K562 (cell line): ENCODE measurements at regions of chr10 and their contacts with region 1.

Region 1: DNA sequence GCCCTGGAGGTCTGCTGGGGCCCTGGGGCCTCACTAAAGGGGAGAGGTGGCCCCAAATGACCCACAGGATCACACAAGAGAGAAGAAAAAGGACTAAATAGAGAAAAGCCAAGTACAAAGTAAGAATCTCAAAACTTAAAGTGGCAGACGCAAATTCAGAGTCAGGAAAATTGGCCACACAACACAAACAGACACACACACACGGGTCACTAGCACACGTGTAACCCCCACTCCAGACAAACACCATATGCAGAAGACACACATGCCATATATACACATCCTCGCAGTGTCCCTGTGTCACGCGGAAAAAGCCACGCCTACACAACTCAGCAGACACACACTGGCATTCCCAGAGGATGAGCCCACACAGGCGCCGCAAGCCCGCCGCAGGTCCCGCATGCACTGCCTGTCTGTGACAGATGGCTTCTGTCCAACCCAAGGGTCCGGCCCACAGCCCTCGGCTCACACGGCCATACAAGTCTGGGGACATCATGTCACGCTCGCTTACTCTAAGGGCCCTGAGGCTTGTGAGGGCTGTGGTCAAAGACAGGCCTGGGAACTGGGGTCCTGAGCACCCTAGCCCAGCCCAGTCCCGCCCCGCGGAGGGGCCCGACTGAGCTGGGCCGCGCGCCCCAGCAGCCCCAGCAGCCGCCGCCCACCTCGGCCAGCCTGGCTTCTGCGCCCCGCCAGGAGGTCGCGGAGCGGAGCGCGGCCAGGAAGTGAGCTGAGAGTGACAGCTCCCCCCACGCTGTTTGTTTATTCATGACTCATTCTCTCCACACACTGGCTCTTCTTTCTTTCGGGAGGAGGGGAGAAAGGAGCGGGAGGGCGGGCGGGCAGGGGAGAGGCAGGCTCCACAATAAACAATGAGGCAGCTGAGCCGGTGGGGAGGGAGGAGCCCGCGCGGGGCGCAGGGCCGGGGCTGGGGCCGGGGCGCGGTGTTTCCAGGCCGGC is 95.5 kb upstream of the ZMIZ1 start:
- DNase-seq: peak; percentile 94 to 98 (median 96)
- ATAC-seq: peak; percentile 84
- H3K4me3 ChIP-seq: peak overlapping the region; percentile 44
- H3K27ac ChIP-seq: peak overlapping the region; percentile 98
- H3K4me1 ChIP-seq: peaks cover 32 to 35% of the 10 kb centered on the region in 2 experiments
- H3K27me3 ChIP-seq: peaks cover 3 to 19% of the 10 kb centered on the region in 2 experiments; a peak in 4 of 5 replicates
- CTCF ChIP-seq: peak in 1 of 3 experiments; percentile 15; a peak in 1 of 6 replicates
- EP300 ChIP-seq: peak; percentile 79
- POLR2A ChIP-seq: peak; percentile 85
- RAD21 ChIP-seq: no peak; a peak in 1 of 4 replicates

Region 2: GRCh38 chr10:79022565-79023230 is 49.5 kb after region 1 on chr10:
- CTCF ChIA-PET with region 1: no interaction called
- POLR2A ChIA-PET with region 1: no interaction called
- in situ Hi-C with region 1: no loop called
- intact Hi-C with region 1: loop called (anchors 1 kb)
- DNase-seq: peak; percentile 83 to 96 (median 94)
- ATAC-seq: peak; percentile 90
- H3K4me3 ChIP-seq: no peak overlapping the region
- H3K27ac ChIP-seq: no peak overlapping the region
- H3K4me1 ChIP-seq: peaks cover 29 to 61% of the 10 kb centered on the region in 2 experiments
- H3K27me3 ChIP-seq: no peaks in the 10 kb centered on the region
- CTCF ChIP-seq: no peak
- EP300 ChIP-seq: no peak
- POLR2A ChIP-seq: no peak
- RAD21 ChIP-seq: no peak

Region 3: DNA sequence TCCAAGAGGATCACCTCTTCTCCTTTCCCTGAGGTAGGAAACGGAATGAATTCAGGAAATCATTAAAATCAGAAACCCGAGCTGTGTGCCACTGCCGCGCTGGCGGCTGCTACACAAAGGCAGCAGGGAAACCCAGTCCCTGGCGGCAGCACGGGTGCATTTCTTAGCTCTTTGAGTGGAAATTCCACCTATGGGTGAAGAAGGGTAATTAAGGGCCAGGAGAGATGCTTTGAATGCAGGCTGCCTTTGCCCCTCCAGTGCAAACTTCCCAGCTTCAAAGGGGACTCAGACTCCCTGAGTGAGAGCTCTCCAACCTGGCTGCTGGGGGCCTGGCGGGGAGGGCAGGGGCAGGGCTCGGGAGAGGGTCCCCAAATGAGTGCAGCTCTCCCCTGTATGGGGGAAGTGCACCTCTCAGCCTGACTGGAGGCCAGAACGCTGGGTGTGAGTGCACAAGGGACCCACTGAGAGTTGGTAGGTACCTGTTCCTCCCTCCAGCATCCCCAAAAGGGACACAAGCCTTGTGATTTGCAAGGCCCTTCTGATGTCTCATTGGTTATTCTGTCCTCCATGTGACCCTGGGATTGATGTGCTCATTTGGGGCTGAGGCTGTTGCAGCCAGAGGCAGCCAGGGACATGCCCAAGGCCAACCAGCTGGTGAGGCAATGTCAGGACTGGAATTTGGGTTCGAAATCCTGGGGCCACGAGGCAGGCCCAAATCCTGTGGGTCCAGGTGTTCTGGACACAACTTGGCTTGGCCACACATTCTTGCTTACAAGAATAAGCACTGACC is 79.3 kb after region 1 on chr10:
- CTCF ChIA-PET with region 1: no interaction called
- POLR2A ChIA-PET with region 1: no interaction called
- in situ Hi-C with region 1: no loop called
- intact Hi-C with region 1: loop called (anchors 5 kb)
- DNase-seq: peak; percentile 55 to 67 (median 64)
- ATAC-seq: peak; percentile 60
- H3K4me3 ChIP-seq: no peak overlapping the region
- H3K27ac ChIP-seq: no peak overlapping the region
- H3K4me1 ChIP-seq: peaks cover 18 to 23% of the 10 kb centered on the region in 2 experiments
- H3K27me3 ChIP-seq: peaks cover 0 to 12% of the 10 kb centered on the region in 2 experiments; a peak in 3 of 5 replicates
- CTCF ChIP-seq: peak; percentile 52 to 97 (median 73)
- EP300 ChIP-seq: no peak
- POLR2A ChIP-seq: no peak
- RAD21 ChIP-seq: peak in 1 of 2 experiments; percentile 48; a peak in 2 of 4 replicates

Region 4: DNA sequence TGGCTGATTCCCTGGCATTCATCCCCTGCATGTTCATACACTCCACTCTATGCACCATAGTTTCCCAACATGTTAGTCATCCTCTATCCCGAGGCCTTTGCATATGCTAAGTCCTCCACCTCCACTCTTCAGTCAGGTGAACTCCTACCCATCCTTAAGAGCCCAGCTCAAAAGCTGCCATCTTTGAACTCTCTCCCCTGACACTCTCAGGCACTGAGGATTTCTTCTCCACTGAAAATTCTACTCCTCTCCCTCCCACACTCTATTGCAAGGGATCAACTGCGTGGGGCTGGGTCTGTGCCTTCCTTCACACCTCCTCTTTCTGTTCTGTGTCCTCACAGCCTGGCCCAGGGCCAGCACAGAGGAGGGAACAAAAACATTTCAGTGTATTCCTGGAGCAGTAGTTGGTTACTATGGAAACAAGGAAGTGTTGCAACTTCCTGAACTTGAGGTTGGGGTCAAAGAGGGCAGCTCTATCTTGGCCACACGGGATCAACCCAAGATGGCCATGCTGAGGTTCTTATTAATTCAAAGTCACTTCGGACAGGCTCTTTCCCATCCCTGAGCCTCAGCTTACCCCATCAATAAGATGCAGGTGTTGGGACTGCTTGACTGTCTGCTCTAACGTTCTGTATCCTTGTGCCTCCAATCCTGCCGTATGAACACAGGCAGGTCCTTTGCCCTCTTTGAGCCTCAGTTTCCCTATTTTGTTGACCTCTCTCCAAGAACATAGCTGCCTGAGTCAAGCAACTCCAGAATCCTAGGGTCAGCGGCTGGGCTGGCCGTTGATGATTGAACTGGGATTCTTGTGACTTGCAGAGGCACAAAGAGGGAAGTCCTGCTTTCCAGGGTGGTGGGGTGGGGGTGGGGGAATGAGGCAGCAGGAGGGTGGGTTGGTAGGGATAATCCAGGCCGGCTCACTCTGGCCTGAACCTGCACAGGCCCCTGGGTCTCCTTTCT is 111.1 kb after region 1 on chr10:
- CTCF ChIA-PET with region 1: no interaction called
- POLR2A ChIA-PET with region 1: interaction called, 5 read pairs
- in situ Hi-C with region 1: no loop called
- intact Hi-C with region 1: loop called (anchors 5 kb)
- DNase-seq: peak; percentile 74 to 92 (median 81)
- ATAC-seq: peak; percentile 77
- H3K4me3 ChIP-seq: no peak overlapping the region
- H3K27ac ChIP-seq: peak overlapping the region; percentile 18; the same call in 1 of the 3 replicates
- H3K4me1 ChIP-seq: peaks cover 73 to 74% of the 10 kb centered on the region in 2 experiments
- H3K27me3 ChIP-seq: no peaks in the 10 kb centered on the region
- CTCF ChIP-seq: no peak
- EP300 ChIP-seq: peak; percentile 78
- POLR2A ChIP-seq: no peak
- RAD21 ChIP-seq: peak; percentile 17 to 20; a peak in 2 of 4 replicates

Region 5: GRCh38 chr10:79381804-79382221 is 408.6 kb after region 1 on chr10:
- CTCF ChIA-PET with region 1: no interaction called
- POLR2A ChIA-PET with region 1: no interaction called
- in situ Hi-C with region 1: no loop called
- intact Hi-C with region 1: no loop called
- DNase-seq: peak in 1 of 4 experiments; percentile 37
- ATAC-seq: peak; percentile 64
- H3K4me3 ChIP-seq: no peak overlapping the region
- H3K27ac ChIP-seq: no peak overlapping the region
- H3K4me1 ChIP-seq: peaks cover 3 to 35% of the 10 kb centered on the region in 2 experiments; a peak in 2 of 5 replicates
- H3K27me3 ChIP-seq: peaks cover 0 to 20% of the 10 kb centered on the region in 2 experiments; a peak in 3 of 5 replicates
- CTCF ChIP-seq: no peak
- EP300 ChIP-seq: no peak
- POLR2A ChIP-seq: no peak
- RAD21 ChIP-seq: no peak